CD4-positive, alpha-beta memory T cell (primary cell): ENCODE measurements at regions of chr19 and their contacts with region 1.

Region 1: DNA sequence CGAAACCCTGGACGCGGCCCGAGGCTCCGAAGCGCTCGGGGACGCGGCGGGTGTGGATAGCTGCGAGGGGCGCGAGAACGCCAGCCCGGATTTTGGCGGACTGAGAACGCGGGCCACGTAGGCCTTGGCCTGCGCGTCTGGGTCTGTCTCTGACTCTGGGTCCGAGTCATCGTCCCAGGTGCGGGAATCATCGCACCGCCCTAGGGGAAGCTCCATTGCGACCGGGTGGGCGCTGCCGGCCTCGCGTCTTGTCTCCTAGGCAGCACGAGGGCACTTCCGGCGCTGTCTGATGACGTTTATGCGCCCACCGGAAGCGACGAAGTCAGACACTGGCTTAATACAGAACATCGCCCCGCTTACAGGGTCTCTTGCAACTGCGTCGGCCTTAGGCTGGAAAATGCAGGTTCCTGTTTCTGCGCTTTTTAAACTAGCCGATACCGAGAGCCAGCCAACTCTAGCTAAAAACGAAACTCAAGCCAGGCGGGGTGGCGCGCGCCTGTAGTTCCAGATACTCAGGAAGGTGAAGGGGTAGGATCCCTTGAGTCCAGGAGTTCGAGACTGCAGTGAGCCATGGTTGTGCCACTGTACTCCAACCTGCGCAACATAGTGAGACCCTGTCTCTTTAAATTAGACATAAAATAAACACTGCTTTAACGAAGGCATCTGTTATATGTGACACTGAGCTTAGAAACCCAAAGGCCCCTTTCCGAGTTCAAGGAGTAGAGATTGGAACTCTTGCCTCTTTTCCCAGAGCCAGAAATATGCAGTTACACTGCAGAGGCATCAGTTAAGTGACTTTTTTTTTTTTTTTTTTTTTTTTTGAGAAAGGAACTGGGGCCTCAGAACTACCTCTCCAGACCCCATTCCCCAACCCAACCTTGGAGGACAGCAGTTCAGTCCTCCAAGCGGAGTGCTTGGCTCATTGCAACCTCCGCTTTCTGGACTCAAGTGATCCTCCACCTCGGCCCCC is at the start of gene FBXW9:
- DNase-seq: peak; percentile 92 to 96 (median 93)
- H3K4me3 ChIP-seq: peak within 1 kb of the TSS; percentile 7 to 56
- H3K4me3 Mint-ChIP-seq: peak within 1 kb of the TSS; percentile 91 to 95 (median 94)
- H3K27ac ChIP-seq: peak within 1 kb of the TSS; percentile 76
- H3K27ac Mint-ChIP-seq: peak within 1 kb of the TSS; percentile 96 to 98 (median 97)
- H3K4me1 ChIP-seq: peaks cover 17% of the 10 kb centered on the region
- H3K4me1 Mint-ChIP-seq: peaks cover 4 to 17% (median 10%) of the 10 kb centered on the region in 4 donors
- H3K27me3 ChIP-seq: no peaks in the 10 kb centered on the region
- H3K27me3 Mint-ChIP-seq: no peaks in the 10 kb centered on the region
- total RNA-seq, gene FBXW9: 4.5 to 4.9 TPM

Region 2: GRCh38 chr19:12564016-12564664 is 132.5 kb before region 1 on chr19:
- CTCF ChIA-PET with region 1: no interaction called
- POLR2A ChIA-PET with region 1: no interaction called
- intact Hi-C with region 1: no loop called
- DNase-seq: peak; percentile 84 to 90 (median 85)
- H3K4me3 ChIP-seq: no peak overlapping the region
- H3K4me3 Mint-ChIP-seq: peak overlapping the region in 1 of 8 donors; percentile 33
- H3K27ac ChIP-seq: no peak overlapping the region
- H3K27ac Mint-ChIP-seq: peak overlapping the region in 1 of 7 donors; percentile 53
- H3K4me1 ChIP-seq: no peaks in the 10 kb centered on the region
- H3K4me1 Mint-ChIP-seq: peaks cover 4 to 5% (median 5%) of the 10 kb centered on the region in 4 donors
- H3K27me3 ChIP-seq: no peaks in the 10 kb centered on the region
- H3K27me3 Mint-ChIP-seq: no peaks in the 10 kb centered on the region

Region 3: GRCh38 chr19:12666265-12667048 is 30.2 kb before region 1 on chr19 and contains the starts of genes MAN2B1 and WDR83:
- CTCF ChIA-PET with region 1: interaction called, 5 read pairs
- POLR2A ChIA-PET with region 1: no interaction called
- intact Hi-C with region 1: loop called (anchors 1 kb)
- DNase-seq: peak; percentile 73 to 81 (median 78)
- H3K4me3 ChIP-seq: peak within 1 kb of the TSS; percentile 65 to 91
- H3K4me3 Mint-ChIP-seq: peak within 1 kb of the TSS; percentile 91 to 99 (median 94)
- H3K27ac ChIP-seq: peak within 1 kb of the TSS; percentile 98
- H3K27ac Mint-ChIP-seq: peak within 1 kb of the TSS; percentile 90 to 99 (median 97)
- H3K4me1 ChIP-seq: peaks cover 52% of the 10 kb centered on the region
- H3K4me1 Mint-ChIP-seq: peaks cover 24 to 70% (median 46%) of the 10 kb centered on the region in 4 donors
- H3K27me3 ChIP-seq: no peaks in the 10 kb centered on the region
- H3K27me3 Mint-ChIP-seq: no peaks in the 10 kb centered on the region
- total RNA-seq, gene MAN2B1: 137 to 141 TPM
- total RNA-seq, gene WDR83: 18.3 to 19.3 TPM

Region 4: GRCh38 chr19:12681074-12681951 is 15.3 kb before region 1 on chr19 and contains the start of gene DHPS:
- CTCF ChIA-PET with region 1: interaction called, 4 read pairs
- POLR2A ChIA-PET with region 1: interaction called, 24 read pairs
- intact Hi-C with region 1: loop called (anchors 1 kb)
- DNase-seq: peak; percentile 90 to 96 (median 94)
- H3K4me3 ChIP-seq: peak within 1 kb of the TSS; percentile 73 to 98
- H3K4me3 Mint-ChIP-seq: peak within 1 kb of the TSS; percentile 90 to 99 (median 98)
- H3K27ac ChIP-seq: peak within 1 kb of the TSS; percentile 98
- H3K27ac Mint-ChIP-seq: peak within 1 kb of the TSS; percentile 83 to 99 (median 97)
- H3K4me1 ChIP-seq: peaks cover 22% of the 10 kb centered on the region
- H3K4me1 Mint-ChIP-seq: peaks cover 12 to 35% (median 25%) of the 10 kb centered on the region in 4 donors
- H3K27me3 ChIP-seq: no peaks in the 10 kb centered on the region
- H3K27me3 Mint-ChIP-seq: no peaks in the 10 kb centered on the region
- total RNA-seq, gene DHPS: 195 to 197 TPM

Region 5: DNA sequence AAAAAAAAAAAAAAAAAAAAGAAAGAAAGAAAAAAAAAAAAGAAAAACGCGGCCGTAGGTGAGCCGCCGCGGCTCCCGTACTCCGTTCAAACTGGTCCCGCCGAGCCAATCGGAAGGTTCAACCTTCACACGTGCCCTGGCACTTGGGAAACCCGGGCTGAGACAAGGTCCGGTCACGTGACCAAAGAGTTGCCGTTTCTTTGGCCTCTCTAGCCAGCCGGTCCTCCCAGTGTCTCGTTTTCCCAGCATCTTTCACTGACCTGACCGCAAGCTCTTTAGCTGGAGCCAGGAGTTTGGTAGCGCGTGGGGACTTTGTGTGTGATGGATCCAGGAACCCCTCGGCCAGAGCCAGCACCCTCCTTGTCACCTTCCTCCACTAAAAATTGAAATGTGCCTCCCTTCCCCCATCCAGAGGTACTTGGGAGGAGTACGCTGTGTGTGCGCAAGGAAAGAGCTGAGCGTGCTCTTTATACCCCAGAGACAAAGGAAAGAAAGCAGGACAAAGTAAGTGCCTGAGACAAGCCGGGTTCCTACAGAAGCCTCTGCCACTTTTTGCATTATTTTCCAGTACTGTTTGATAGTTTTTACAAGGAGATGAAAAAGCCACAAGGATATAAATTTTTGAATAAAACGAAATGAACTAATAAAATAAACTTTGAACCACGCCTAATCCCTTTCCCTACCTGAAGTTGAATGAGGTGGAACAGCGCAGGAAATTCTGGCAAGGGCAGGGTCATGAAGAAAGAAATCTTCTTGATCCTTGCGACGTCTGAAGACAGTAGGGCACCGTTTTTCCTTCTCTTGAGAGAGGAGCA is 26.1 kb after region 1 on chr19:
- CTCF ChIA-PET with region 1: no interaction called
- POLR2A ChIA-PET with region 1: interaction called, 26 read pairs
- intact Hi-C with region 1: loop called (anchors 1 kb)
- DNase-seq: peak; percentile 91 to 97 (median 95)
- H3K4me3 ChIP-seq: peak overlapping the region; percentile 21 to 78
- H3K4me3 Mint-ChIP-seq: peak overlapping the region; percentile 87 to 98 (median 92)
- H3K27ac ChIP-seq: peak overlapping the region; percentile 73
- H3K27ac Mint-ChIP-seq: peak overlapping the region; percentile 88 to 98 (median 93)
- H3K4me1 ChIP-seq: peaks cover 30% of the 10 kb centered on the region
- H3K4me1 Mint-ChIP-seq: peaks cover 21 to 54% (median 35%) of the 10 kb centered on the region in 4 donors
- H3K27me3 ChIP-seq: no peaks in the 10 kb centered on the region
- H3K27me3 Mint-ChIP-seq: peaks cover 0 to 1% of the 10 kb centered on the region in 2 donors

Region 6: GRCh38 chr19:12736995-12737834 is 40.6 kb after region 1 on chr19 and contains the start of gene GET3:
- CTCF ChIA-PET with region 1: no interaction called
- POLR2A ChIA-PET with region 1: interaction called, 34 read pairs
- intact Hi-C with region 1: no loop called
- DNase-seq: peak; percentile 87 to 91 (median 89)
- H3K4me3 ChIP-seq: peak within 1 kb of the TSS; percentile 77 to 80
- H3K4me3 Mint-ChIP-seq: peak within 1 kb of the TSS; percentile 98 to 100 (median 99)
- H3K27ac ChIP-seq: peak within 1 kb of the TSS; percentile 87
- H3K27ac Mint-ChIP-seq: peak within 1 kb of the TSS; percentile 94 to 98 (median 97)
- H3K4me1 ChIP-seq: peaks cover 40% of the 10 kb centered on the region
- H3K4me1 Mint-ChIP-seq: peaks cover 25 to 50% (median 36%) of the 10 kb centered on the region in 4 donors
- H3K27me3 ChIP-seq: no peaks in the 10 kb centered on the region
- H3K27me3 Mint-ChIP-seq: peaks cover 0 to 2% of the 10 kb centered on the region in 2 donors
- total RNA-seq, gene GET3: 30.8 to 34.5 TPM